ENCODE measurements at regions of chr22 and their contacts with region 1.

Region 1: DNA sequence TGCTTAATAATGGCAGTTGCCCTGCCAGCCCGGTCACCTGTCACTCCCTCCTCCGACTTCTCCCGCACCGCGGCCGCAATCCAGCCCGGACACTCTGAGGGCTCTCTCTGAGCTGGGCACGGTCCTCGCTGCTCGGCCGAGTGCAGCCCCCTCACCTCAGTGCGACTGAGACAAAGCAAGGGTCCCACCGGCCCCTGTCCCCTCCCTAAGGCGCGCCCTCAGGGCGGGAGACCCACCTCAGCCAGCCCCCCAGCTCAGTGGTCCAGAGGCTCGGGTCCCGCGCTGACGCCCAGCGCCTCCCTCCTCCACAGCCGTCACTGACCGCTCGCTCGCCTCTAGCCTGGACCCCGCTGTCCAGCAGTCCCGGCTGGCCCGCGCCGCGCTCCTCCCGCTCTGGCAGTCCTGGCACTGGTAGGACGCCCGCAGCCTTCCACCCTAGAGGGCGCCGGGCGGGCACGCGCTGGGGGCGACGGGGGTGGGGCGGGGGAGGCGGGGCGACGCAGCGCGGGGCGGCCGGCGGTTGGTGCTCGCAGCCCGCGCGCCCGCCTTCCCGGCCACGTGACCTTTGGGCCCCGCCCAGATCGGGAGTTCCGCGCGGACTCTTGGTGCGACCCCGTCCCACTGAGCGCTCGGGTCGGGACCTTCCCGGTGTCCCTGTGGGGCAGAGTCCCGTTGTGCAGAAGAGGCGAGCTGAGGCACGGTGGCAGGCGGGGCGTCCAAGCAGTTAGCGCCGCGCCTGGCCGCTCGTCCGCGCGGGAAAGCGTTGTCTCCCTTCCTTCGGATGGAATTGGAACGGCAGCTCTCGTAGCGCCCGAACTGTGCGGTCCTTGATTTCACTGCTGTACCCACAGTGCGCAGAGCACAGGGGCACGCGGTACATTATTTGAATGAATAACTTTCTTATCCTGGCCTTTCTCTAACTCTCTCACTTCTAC is 7.8 kb upstream of the L3MBTL2 start:
- DNase-seq: peak; percentile 88
- H3K4me3 ChIP-seq: peak overlapping the region; percentile 60 to 83 (median 66)
- H3K27ac ChIP-seq: peak overlapping the region; percentile 29 to 65 (median 50)
- H3K4me1 ChIP-seq: peaks cover 0 to 21% (median 17%) of the 10 kb centered on the region in 4 donors
- H3K27me3 ChIP-seq: no peaks in the 10 kb centered on the region
- CTCF ChIP-seq: peak in 2 of 4 experiments; percentile 17 to 24
- EP300 ChIP-seq: no peak
- POLR2A ChIP-seq: no peak

Region 2: GRCh38 chr22:41367039-41367679 is 169.9 kb after region 1 on chr22:
- intact Hi-C with region 1: loop called (anchors 10 kb)
- DNase-seq: peak; percentile 99
- H3K4me3 ChIP-seq: peak overlapping the region; percentile 41 to 57 (median 56)
- H3K27ac ChIP-seq: peak overlapping the region; percentile 83 to 85 (median 83)
- H3K4me1 ChIP-seq: peaks cover 0 to 51% (median 34%) of the 10 kb centered on the region in 4 donors
- H3K27me3 ChIP-seq: no peaks in the 10 kb centered on the region
- CTCF ChIP-seq: peak in 3 of 4 experiments; percentile 22 to 27 (median 27)
- EP300 ChIP-seq: peak in 2 of 4 donors; percentile 22 to 69
- POLR2A ChIP-seq: peak; percentile 46 to 69

Measured in sigmoid colon (tissue), 7 donors.